Activated T-helper 1 cell treated with anti-CD3 and anti-CD28 coated beads, Interleukin-12 subunit alpha, Interleukin-12 subunit beta, Interleukin-2, Interleukin-4 antibody, amounts not matched to agents 30 ng/mL and 10 ng/mL and 1 ng/mL, durations not matched to agents 14 hours and 24 hours and 36 hours (primary cell): ENCODE measurements at regions of chr1 and their contacts with region 1.

Region 1: GRCh38 chr1:58573705-58574591 is 3.1 kb downstream of the TACSTD2 start:
- DNase-seq: peak; percentile 67
- H3K4me3 Mint-ChIP-seq: peak overlapping the region; percentile 41
- H3K27ac Mint-ChIP-seq: peak overlapping the region; percentile 26
- H3K4me1 Mint-ChIP-seq: peaks cover 44% of the 10 kb centered on the region
- H3K27me3 Mint-ChIP-seq: peaks cover 74% of the 10 kb centered on the region

Region 2: DNA sequence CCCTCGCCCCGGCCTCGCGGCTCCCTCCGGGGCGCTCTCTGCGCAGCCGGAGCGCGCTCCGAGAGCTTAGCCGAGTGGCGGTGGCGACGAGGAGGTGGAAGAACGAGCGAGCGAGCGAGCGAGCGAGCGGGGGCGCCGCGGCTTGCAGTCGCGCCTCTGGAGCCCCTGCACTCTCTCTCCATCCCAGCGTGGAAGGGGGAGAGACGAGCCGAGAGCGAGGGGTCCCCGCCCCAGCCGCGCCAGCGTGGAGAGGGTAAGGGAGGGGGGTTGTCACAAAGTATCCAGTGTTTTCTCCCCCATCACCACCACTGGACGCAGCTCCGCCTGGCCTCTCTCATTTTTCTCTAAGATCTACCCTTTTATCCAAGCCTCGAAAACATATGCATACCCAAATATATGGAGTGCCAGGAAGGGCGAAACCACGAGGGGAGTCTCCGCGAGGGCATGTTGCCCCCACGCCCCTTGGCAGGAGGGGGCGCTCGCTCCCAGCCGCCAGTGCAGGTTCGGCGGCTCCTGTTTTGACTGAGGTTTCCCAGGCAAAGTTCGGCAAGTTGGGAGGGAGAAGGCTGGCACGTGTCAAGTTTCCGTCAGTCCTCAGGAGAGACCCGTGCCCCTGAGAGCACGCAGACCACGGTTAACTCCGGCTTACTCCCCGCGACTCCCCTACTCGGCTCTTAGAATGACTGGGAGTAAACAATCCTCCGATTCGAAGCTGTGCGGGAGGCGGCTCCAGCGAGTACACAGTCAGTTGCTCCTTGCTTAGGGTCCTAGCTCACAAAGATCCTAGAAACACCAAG is 1149.5 kb before region 1 on chr1:
- intact Hi-C with region 1: loop called (anchors 10 kb)
- DNase-seq: no peak
- H3K4me3 Mint-ChIP-seq: no peak overlapping the region
- H3K27ac Mint-ChIP-seq: no peak overlapping the region
- H3K4me1 Mint-ChIP-seq: no peaks in the 10 kb centered on the region
- H3K27me3 Mint-ChIP-seq: peaks cover 47% of the 10 kb centered on the region

Region 3: DNA sequence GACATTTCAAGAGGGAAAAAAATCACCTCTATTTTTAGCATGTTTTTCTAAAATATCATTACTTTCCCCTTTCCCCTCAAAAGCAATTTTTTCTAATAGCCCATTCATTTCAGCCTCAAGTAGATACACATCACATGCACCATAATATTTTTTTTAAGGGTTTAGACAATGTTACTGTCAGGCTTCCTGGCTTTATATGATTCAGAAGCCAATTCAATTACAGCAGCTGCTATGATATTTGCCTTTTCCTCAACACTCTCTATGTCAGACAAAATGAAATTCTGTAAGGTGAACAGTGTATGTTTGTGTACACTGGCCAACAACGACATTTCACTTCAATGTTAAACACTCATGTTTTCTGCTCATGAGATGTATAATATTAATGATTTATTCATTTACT is 73.9 kb before region 1 on chr1:
- intact Hi-C with region 1: no loop called
- DNase-seq: no peak
- H3K4me3 Mint-ChIP-seq: no peak overlapping the region
- H3K27ac Mint-ChIP-seq: no peak overlapping the region
- H3K4me1 Mint-ChIP-seq: no peaks in the 10 kb centered on the region
- H3K27me3 Mint-ChIP-seq: no peaks in the 10 kb centered on the region

Region 4: GRCh38 chr1:58524353-58524945 is 49.5 kb before region 1 on chr1:
- intact Hi-C with region 1: loop called (anchors 2 kb)
- DNase-seq: no peak
- H3K4me3 Mint-ChIP-seq: no peak overlapping the region
- H3K27ac Mint-ChIP-seq: no peak overlapping the region
- H3K4me1 Mint-ChIP-seq: peaks cover 9% of the 10 kb centered on the region
- H3K27me3 Mint-ChIP-seq: no peaks in the 10 kb centered on the region

Region 5: GRCh38 chr1:58584082-58584895 is 10.3 kb after region 1 on chr1:
- intact Hi-C with region 1: loop called (anchors 1 kb)
- DNase-seq: no peak
- H3K4me3 Mint-ChIP-seq: no peak overlapping the region
- H3K27ac Mint-ChIP-seq: peak overlapping the region; percentile 24
- H3K4me1 Mint-ChIP-seq: peaks cover 23% of the 10 kb centered on the region
- H3K27me3 Mint-ChIP-seq: peaks cover 62% of the 10 kb centered on the region

Region 6: DNA sequence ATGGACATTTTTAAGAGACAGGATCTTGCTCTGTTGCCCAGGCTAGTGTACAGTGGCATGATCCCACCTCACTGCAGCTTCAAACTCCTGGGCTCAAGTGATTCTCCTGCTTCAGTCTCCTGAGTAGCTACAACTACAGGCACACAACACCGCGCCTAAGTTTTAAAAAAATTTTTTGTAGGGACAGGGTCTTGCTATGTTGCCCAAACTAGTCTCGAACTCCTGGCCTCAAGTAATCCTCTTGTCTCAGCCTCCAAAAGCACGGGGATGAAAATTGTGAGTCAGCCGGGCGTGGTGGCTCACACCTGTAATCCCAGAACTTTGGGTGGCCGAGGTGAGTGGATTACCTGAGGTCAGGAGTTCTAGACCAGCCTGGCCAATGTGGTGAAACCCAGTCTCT is 105.5 kb after region 1 on chr1:
- intact Hi-C with region 1: no loop called
- DNase-seq: no peak
- H3K4me3 Mint-ChIP-seq: no peak overlapping the region
- H3K27ac Mint-ChIP-seq: no peak overlapping the region
- H3K4me1 Mint-ChIP-seq: peaks cover 26% of the 10 kb centered on the region
- H3K27me3 Mint-ChIP-seq: no peaks in the 10 kb centered on the region